ENCODE measurements at regions of chr5 and their contacts with region 1.

Region 1: GRCh38 chr5:56951946-56952691 is at the start of gene MIER3:
- DNase-seq: peak; percentile 84
- H3K4me3 ChIP-seq: peak within 1 kb of the TSS; percentile 94
- H3K27ac ChIP-seq: peak within 1 kb of the TSS; percentile 77
- H3K4me1 ChIP-seq: no peaks in the 10 kb centered on the region
- H3K27me3 ChIP-seq: peaks cover 46% of the 10 kb centered on the region
- CTCF ChIP-seq: no peak
- total RNA-seq, gene MIER3: 26.2 and 32.5 TPM in 2 replicates

Region 2: GRCh38 chr5:57082441-57083067 is 130.4 kb after region 1 on chr5:
- CTCF ChIA-PET with region 1: no interaction called
- POLR2A ChIA-PET with region 1: no interaction called
- intact Hi-C with region 1: loop called (anchors 5 kb)
- DNase-seq: peak; percentile 30
- H3K4me3 ChIP-seq: no peak overlapping the region
- H3K27ac ChIP-seq: no peak overlapping the region
- H3K4me1 ChIP-seq: no peaks in the 10 kb centered on the region
- H3K27me3 ChIP-seq: no peaks in the 10 kb centered on the region
- CTCF ChIP-seq: peak; percentile 56